Activated naive CD8-positive, alpha-beta T cell treated with anti-CD3 and anti-CD28 coated beads, Interleukin-2, amount 10 ng/mL, durations not matched to agents 7 days and 5 days (primary cell): ENCODE measurements at regions of chr11 and their contacts with region 1.

Region 1: GRCh38 chr11:67353317-67354074 is at the start of gene POLD4:
- DNase-seq: peak; percentile 95
- ATAC-seq: peak; percentile 87
- H3K4me3 Mint-ChIP-seq: peak within 1 kb of the TSS; percentile 98
- H3K27ac Mint-ChIP-seq: peak within 1 kb of the TSS; percentile 100
- H3K4me1 Mint-ChIP-seq: peaks cover 29% of the 10 kb centered on the region
- H3K27me3 Mint-ChIP-seq: no peaks in the 10 kb centered on the region
- total RNA-seq, gene POLD4: 73.2 to 78.2 TPM

Region 2: DNA sequence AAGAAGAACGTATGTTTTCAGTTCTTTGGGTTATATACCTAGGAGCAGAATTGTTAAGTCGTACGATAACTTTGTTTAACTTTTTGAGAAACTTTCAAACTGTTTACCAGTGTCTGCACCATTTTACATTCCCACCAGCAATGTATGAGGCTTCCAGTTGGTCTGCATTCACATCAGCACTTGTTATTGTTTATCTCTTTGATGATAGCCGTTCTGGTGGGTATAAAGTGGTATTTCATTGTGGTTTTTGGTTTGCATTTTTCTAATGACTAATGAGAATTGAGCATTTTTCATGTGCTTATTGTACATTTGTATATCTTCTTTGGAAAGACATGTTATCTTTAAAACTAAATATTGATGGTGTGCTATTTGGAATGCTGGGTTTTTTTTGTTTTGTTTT is 174.6 kb before region 1 on chr11:
- POLR2A ChIA-PET with region 1: no interaction called
- DNase-seq: no peak
- ATAC-seq: no peak
- H3K4me3 Mint-ChIP-seq: no peak overlapping the region
- H3K27ac Mint-ChIP-seq: no peak overlapping the region
- H3K4me1 Mint-ChIP-seq: peaks cover 8% of the 10 kb centered on the region
- H3K27me3 Mint-ChIP-seq: no peaks in the 10 kb centered on the region

Region 3: GRCh38 chr11:67253859-67254544 is 99.5 kb before region 1 on chr11:
- POLR2A ChIA-PET with region 1: no interaction called
- DNase-seq: peak; percentile 14
- ATAC-seq: peak; percentile 34
- H3K4me3 Mint-ChIP-seq: peak overlapping the region; percentile 27
- H3K27ac Mint-ChIP-seq: peak overlapping the region; percentile 78
- H3K4me1 Mint-ChIP-seq: peaks cover 41% of the 10 kb centered on the region
- H3K27me3 Mint-ChIP-seq: no peaks in the 10 kb centered on the region

Region 4: GRCh38 chr11:67288452-67289225 is 64.9 kb before region 1 on chr11:
- POLR2A ChIA-PET with region 1: interaction called, 16 read pairs
- DNase-seq: peak; percentile 96
- ATAC-seq: peak; percentile 68
- H3K4me3 Mint-ChIP-seq: peak overlapping the region; percentile 79
- H3K27ac Mint-ChIP-seq: peak overlapping the region; percentile 96
- H3K4me1 Mint-ChIP-seq: peaks cover 40% of the 10 kb centered on the region
- H3K27me3 Mint-ChIP-seq: no peaks in the 10 kb centered on the region

Region 5: DNA sequence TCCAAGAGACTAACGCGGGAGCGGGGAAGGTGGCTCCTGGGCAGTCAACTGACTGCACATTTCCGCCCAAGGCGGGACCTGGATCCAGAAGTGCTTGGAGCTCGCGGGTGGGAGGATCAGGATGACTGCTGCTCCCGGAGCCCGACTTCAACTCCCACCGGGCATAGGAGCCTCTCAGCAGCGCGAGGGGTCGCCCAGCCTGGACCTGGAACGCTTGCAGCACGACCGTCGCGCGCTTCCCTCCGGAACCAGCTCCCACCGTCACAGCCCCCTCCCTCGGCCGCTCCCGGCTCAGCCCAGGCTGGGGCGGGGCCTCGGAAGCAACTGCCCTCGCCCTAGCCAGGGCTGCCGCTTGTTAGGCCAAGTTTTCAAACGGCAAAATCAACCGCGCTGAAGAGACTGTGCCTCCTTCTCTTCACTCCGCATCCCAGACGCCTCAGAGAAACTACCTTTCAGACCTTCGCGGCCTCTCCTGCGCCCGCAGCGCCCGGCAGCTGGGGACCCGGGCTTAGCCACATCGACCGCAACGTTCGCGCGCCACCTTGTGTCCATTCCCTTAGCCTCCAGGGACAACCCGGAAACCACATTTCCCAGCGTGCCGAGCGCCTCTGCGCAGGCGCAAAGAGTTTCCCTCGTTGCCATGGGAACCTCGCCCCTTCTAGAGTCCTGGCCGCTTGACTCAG is 36.1 kb before region 1 on chr11:
- POLR2A ChIA-PET with region 1: interaction called, 10 read pairs
- DNase-seq: peak; percentile 99
- ATAC-seq: peak; percentile 77
- H3K4me3 Mint-ChIP-seq: peak overlapping the region; percentile 98
- H3K27ac Mint-ChIP-seq: peak overlapping the region; percentile 99
- H3K4me1 Mint-ChIP-seq: peaks cover 32% of the 10 kb centered on the region
- H3K27me3 Mint-ChIP-seq: peaks cover 9% of the 10 kb centered on the region

Region 6: DNA sequence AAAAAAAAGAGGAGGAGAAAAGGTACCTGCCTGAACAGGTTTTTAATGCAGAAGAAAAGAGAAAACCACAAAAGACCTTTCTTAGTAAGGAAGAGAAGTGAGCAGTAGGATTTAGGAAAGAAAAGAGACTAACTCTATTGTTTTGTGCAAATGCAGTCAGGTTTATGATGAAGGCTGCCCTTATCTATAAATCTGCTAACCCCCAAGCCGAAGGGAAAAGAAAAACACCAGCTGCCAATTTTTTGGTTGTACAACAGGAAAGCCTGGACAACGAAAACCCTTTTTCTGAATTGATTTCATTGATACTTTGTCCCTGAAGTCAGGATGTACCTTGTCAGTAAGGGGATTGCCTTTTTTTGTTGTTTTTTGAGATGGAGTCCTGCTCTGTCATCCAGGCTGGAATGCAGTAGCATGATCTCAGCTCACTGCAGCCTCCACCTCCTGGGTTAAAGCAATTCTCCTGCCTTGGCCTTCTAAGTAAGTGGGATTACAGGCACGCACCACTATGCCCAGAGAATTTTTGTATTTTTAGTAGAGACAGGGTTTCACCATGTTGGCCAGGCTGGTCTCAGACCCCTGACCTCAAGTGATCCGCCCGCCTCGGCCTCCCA is 21.3 kb before region 1 on chr11:
- POLR2A ChIA-PET with region 1: no interaction called
- DNase-seq: no peak
- ATAC-seq: no peak
- H3K4me3 Mint-ChIP-seq: no peak overlapping the region
- H3K27ac Mint-ChIP-seq: no peak overlapping the region
- H3K4me1 Mint-ChIP-seq: no peaks in the 10 kb centered on the region
- H3K27me3 Mint-ChIP-seq: no peaks in the 10 kb centered on the region

Region 7: DNA sequence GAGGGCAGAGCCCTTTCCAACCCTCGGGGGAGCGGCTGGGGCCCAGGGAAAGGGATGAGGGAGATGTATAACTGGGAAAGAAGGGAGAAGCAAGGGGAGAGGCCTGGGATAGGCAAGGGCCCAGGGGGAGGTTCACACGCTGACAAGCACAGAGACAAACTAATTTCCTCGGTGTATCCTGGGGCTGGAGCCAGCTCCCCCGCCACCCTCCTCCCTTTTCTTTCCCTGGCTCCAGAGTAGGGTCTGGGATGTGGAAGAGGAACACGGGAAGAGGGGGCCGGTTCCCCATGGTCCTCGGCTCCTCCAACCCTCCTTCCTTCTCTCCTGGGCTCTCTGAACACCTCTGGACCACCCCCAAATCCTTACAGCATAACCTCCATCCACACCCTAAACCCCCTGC is 13.1 kb after region 1 on chr11:
- POLR2A ChIA-PET with region 1: interaction called, 42 read pairs
- DNase-seq: no peak
- ATAC-seq: no peak
- H3K4me3 Mint-ChIP-seq: no peak overlapping the region
- H3K27ac Mint-ChIP-seq: no peak overlapping the region
- H3K4me1 Mint-ChIP-seq: peaks cover 43% of the 10 kb centered on the region
- H3K27me3 Mint-ChIP-seq: peaks cover 44% of the 10 kb centered on the region

Region 8: DNA sequence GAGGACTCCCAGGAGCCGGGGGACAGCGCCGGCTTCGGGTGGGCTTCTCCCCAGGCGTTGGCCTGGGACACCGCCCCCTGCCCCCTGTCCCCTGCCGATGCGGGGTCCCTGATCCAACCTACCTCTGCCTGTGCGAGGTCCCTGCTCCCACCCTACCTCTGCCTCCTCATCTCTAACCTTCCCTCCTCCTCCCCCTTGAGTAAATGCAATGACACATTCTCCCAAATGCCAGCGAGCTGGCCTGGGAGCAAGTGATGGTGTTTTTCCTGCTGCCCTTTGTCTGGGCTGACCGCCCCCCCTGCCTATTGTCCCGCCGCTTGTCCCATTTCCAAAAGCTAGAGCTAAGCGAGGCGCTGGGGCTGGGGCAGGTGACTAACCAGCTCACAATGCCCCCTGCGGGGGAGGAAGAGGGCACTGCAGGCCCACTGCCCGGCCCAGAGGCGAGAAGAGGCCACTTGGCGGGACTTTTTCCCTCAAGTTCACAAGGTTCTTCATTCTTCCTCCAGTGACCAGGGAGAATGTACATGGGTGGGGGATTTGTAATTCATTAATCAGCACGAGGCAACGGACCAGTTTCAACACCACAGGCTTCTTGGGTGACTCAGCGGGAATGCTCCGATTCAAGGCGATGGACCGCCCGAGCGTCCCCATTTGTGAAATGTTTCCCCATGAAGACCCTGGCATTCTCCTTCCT is 20.6 kb after region 1 on chr11:
- POLR2A ChIA-PET with region 1: interaction called, 42 read pairs
- DNase-seq: no peak
- ATAC-seq: peak; percentile 41
- H3K4me3 Mint-ChIP-seq: peak overlapping the region; percentile 85
- H3K27ac Mint-ChIP-seq: peak overlapping the region; percentile 65
- H3K4me1 Mint-ChIP-seq: peaks cover 33% of the 10 kb centered on the region
- H3K27me3 Mint-ChIP-seq: peaks cover 58% of the 10 kb centered on the region

Region 9: DNA sequence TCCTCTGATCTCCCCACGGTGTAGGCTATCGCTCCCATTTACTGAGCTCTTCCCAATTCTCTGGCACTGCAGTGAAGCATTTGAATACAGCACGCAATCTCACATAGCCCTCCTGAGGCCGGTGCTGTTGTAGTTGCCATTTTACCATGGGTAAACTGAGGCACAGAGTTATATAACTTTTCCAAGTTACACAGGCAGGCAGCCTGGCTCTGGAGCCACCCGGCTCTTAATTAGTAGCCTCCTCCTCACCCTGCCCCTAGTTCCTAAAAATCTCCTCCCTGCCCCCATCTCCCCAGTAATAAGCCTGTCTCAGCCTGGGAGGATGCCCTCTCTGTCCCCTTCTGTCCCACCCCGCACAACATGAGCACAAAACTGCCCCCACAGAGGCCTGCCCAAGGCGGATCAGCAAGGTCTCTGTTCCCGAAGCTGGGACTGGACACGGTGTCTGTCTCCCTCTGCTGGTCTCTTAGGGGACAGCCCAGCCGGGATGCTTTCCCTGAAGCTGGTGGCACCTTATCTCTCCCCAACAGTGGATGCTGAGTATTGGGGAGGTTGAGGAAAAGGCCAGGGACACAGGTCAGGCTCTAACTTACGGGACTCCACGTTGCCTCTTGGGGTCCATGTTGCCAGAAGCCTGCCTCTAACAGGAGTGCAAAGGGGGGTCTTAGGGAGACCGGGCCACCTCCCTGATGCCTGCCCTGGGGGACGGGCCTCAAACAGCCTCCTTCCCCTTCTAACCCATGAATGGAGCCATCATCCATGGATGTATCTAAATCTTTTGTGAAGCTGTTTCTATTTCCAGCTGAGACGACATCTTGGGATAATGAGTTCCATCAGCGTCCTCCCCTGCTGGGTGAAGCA is 29.0 kb after region 1 on chr11:
- POLR2A ChIA-PET with region 1: interaction called, 28 read pairs
- DNase-seq: peak; percentile 84
- ATAC-seq: peak; percentile 89
- H3K4me3 Mint-ChIP-seq: no peak overlapping the region
- H3K27ac Mint-ChIP-seq: no peak overlapping the region
- H3K4me1 Mint-ChIP-seq: peaks cover 7% of the 10 kb centered on the region
- H3K27me3 Mint-ChIP-seq: peaks cover 13% of the 10 kb centered on the region

Region 10: GRCh38 chr11:67391304-67392132 is 38.0 kb after region 1 on chr11 and contains the start of gene RAD9A:
- POLR2A ChIA-PET with region 1: interaction called, 12 read pairs
- DNase-seq: peak; percentile 93
- ATAC-seq: peak; percentile 68
- H3K4me3 Mint-ChIP-seq: peak within 1 kb of the TSS; percentile 96
- H3K27ac Mint-ChIP-seq: peak within 1 kb of the TSS; percentile 75
- H3K4me1 Mint-ChIP-seq: peaks cover 36% of the 10 kb centered on the region
- H3K27me3 Mint-ChIP-seq: no peaks in the 10 kb centered on the region
- total RNA-seq, gene RAD9A: 65.3 to 67.1 TPM